ENCODE measurements at regions of chr5 and their contacts with region 1.

Region 1: GRCh38 chr5:124996764-124997077 is 250.3 kb upstream of the ZNF608 start:
- DNase-seq: peak in 1 of 2 experiments; percentile 59
- H3K4me3 ChIP-seq: no peak overlapping the region
- H3K4me3 Mint-ChIP-seq: peak overlapping the region; percentile 52
- H3K27ac Mint-ChIP-seq: peak overlapping the region; percentile 93
- H3K4me1 ChIP-seq: peaks cover 49% of the 10 kb centered on the region
- H3K4me1 Mint-ChIP-seq: peaks cover 39% of the 10 kb centered on the region
- H3K27me3 ChIP-seq: no peaks in the 10 kb centered on the region; the same call in 1 of the 2 replicates
- H3K27me3 Mint-ChIP-seq: no peaks in the 10 kb centered on the region
- CTCF ChIP-seq: no peak

Region 2: DNA sequence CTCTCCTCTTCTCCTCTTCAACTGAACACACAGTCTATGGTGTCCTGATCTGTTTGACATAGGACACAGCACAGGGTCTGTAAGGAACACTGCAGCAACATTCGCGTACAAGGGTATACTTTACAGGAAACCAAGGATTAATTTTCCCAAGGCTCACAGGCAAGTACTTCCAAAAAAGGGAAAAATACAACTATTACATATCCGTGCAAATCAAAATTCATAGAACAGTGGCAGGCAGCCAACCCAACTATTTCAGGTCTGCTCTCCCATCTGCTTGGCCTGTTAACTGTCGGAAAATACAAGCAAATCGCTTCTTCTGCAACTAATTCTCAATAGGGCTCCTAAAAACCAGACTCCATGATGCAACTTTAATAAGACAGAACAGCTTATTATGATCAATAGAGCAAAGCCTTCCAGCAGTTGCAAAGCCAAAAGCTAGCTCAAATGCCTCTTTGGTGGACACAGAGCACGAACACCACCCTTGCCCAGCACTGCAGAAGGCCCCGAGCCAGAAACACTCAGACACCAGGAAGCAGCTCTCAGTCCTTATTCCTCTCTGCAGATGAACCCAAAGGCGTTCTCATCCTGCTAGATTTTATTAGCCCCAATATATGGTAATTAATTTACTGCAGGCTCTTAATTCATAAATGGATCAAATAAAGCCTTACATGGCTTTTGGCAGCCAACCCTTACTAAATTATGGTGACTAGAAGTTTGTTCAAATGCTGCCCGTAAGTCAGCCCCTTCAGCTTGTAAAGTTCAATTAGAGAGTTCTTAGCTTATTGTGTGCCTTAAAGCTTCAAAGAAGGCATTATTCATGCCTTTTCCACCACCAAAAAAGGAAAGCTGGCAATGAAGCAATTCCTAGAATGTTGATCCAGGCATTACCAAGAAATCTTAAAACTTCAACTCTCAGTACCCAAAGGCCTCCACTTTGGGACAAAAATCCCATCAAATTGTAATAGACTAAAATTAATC is 319.1 kb before region 1 on chr5:
- CTCF ChIA-PET with region 1: no interaction called
- POLR2A ChIA-PET with region 1: no interaction called
- intact Hi-C with region 1: loop called (anchors 5 kb)
- DNase-seq: no peak
- H3K4me3 ChIP-seq: no peak overlapping the region
- H3K4me3 Mint-ChIP-seq: no peak overlapping the region
- H3K27ac Mint-ChIP-seq: peak overlapping the region; percentile 37
- H3K4me1 ChIP-seq: peaks cover 59% of the 10 kb centered on the region
- H3K4me1 Mint-ChIP-seq: peaks cover 42% of the 10 kb centered on the region
- H3K27me3 ChIP-seq: no peaks in the 10 kb centered on the region
- H3K27me3 Mint-ChIP-seq: no peaks in the 10 kb centered on the region
- CTCF ChIP-seq: no peak

Region 3: DNA sequence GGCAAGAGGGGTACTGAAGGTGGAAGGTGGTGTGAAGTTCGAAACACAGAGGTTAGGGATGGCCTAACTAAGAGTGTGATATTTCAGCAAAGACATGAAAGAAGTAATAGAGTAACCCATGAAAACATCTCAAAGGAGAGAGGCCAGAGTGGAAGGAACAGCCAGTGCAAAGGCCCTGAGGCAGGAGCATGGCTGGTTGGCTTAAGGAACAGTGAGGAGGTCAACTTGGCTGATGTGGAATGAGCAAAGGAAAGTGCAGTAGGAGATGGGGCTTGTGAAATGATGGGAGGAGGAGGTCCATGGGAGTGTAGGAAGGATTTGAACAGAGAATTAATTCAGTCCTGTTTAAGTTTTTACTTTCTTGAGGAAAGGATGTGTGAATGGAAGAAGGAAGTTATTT is 72.0 kb before region 1 on chr5:
- CTCF ChIA-PET with region 1: no interaction called
- POLR2A ChIA-PET with region 1: no interaction called
- intact Hi-C with region 1: loop called (anchors 1 kb)
- DNase-seq: no peak
- H3K4me3 ChIP-seq: no peak overlapping the region
- H3K4me3 Mint-ChIP-seq: peak overlapping the region; percentile 12
- H3K27ac Mint-ChIP-seq: peak overlapping the region; percentile 57
- H3K4me1 ChIP-seq: peaks cover 50% of the 10 kb centered on the region
- H3K4me1 Mint-ChIP-seq: peaks cover 23% of the 10 kb centered on the region
- H3K27me3 ChIP-seq: no peaks in the 10 kb centered on the region
- H3K27me3 Mint-ChIP-seq: no peaks in the 10 kb centered on the region
- CTCF ChIP-seq: no peak

Region 4: GRCh38 chr5:125017796-125018195 is 21.1 kb after region 1 on chr5:
- CTCF ChIA-PET with region 1: no interaction called
- POLR2A ChIA-PET with region 1: no interaction called
- intact Hi-C with region 1: loop called (anchors 1 kb)
- DNase-seq: peak; percentile 84 to 87
- H3K4me3 ChIP-seq: no peak overlapping the region
- H3K4me3 Mint-ChIP-seq: peak overlapping the region; percentile 12
- H3K27ac Mint-ChIP-seq: peak overlapping the region; percentile 77
- H3K4me1 ChIP-seq: peaks cover 60% of the 10 kb centered on the region
- H3K4me1 Mint-ChIP-seq: peaks cover 24% of the 10 kb centered on the region
- H3K27me3 ChIP-seq: no peaks in the 10 kb centered on the region
- H3K27me3 Mint-ChIP-seq: no peaks in the 10 kb centered on the region
- CTCF ChIP-seq: no peak

Region 5: GRCh38 chr5:125026896-125027732 is 30.4 kb after region 1 on chr5:
- CTCF ChIA-PET with region 1: no interaction called
- POLR2A ChIA-PET with region 1: no interaction called
- intact Hi-C with region 1: loop called (anchors 1 kb)
- DNase-seq: peak; percentile 70 to 84
- H3K4me3 ChIP-seq: no peak overlapping the region
- H3K4me3 Mint-ChIP-seq: peak overlapping the region; percentile 6
- H3K27ac Mint-ChIP-seq: peak overlapping the region; percentile 59
- H3K4me1 ChIP-seq: peaks cover 26% of the 10 kb centered on the region
- H3K4me1 Mint-ChIP-seq: peaks cover 46% of the 10 kb centered on the region
- H3K27me3 ChIP-seq: no peaks in the 10 kb centered on the region
- H3K27me3 Mint-ChIP-seq: no peaks in the 10 kb centered on the region
- CTCF ChIP-seq: no peak